B cell (primary cell): ENCODE measurements at regions of chr19 and their contacts with region 1.

Region 1: GRCh38 chr19:47130591-47131227 is at the start of gene SAE1:
- DNase-seq: peak; percentile 97
- ATAC-seq: peak; percentile 89
- H3K4me3 ChIP-seq: peak within 1 kb of the TSS; percentile 50 to 98 (median 88)
- H3K4me3 Mint-ChIP-seq: peak within 1 kb of the TSS; percentile 97
- H3K27ac ChIP-seq: peak within 1 kb of the TSS; percentile 76 to 89
- H3K27ac Mint-ChIP-seq: peak within 1 kb of the TSS; percentile 98
- H3K4me1 ChIP-seq: peaks cover 0 to 21% of the 10 kb centered on the region in 2 donors
- H3K4me1 Mint-ChIP-seq: peaks cover 39% of the 10 kb centered on the region
- H3K27me3 ChIP-seq: no peaks in the 10 kb centered on the region
- H3K27me3 Mint-ChIP-seq: no peaks in the 10 kb centered on the region
- CTCF ChIP-seq: peak; percentile 65
- total RNA-seq, gene SAE1: 41.0 and 45.1 TPM in 2 replicates

Region 2: GRCh38 chr19:47081111-47081510 is 49.6 kb before region 1 on chr19:
- CTCF ChIA-PET with region 1: interaction called, 152 read pairs
- POLR2A ChIA-PET with region 1: interaction called, 3 read pairs
- intact Hi-C with region 1: no loop called
- DNase-seq: no peak
- ATAC-seq: no peak
- H3K4me3 ChIP-seq: no peak overlapping the region
- H3K4me3 Mint-ChIP-seq: no peak overlapping the region
- H3K27ac ChIP-seq: no peak overlapping the region
- H3K27ac Mint-ChIP-seq: no peak overlapping the region
- H3K4me1 ChIP-seq: peaks cover 0 to 9% of the 10 kb centered on the region in 2 donors
- H3K4me1 Mint-ChIP-seq: peaks cover 5% of the 10 kb centered on the region
- H3K27me3 ChIP-seq: no peaks in the 10 kb centered on the region
- H3K27me3 Mint-ChIP-seq: no peaks in the 10 kb centered on the region
- CTCF ChIP-seq: no peak

Region 3: DNA sequence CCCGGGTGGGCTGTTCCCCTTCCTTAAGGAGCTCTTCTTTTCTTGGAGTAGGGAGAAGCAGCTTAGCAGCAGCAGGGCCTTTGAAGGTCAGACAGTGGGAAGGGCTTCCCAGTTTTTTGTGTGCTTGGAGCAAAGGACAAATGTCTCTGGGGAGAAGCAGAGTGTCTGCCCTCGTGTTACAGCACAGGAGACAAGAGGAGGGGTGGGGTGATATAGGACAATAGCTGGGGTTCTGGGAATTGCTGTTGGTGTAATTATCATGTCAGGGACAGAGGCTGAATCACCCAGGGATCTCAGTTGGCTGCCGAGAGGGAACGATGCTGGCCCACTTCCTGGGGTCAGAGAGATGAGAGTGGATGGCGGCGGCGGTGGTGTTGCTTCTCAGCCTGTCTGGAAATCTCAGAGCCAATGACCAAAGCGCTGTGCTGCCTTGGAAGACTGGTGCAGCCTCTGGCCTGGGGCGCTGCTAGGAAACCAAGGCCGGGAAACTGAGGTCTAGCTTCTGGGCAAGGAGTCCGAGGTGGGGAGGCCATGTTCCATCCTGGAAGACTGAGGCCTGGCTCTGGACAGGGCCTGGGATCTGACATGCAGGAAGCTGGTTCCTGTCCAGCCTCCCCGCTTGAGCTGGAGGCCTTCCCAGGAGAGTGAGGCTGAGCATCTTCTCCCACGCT is 145.2 kb after region 1 on chr19:
- CTCF ChIA-PET with region 1: no interaction called
- POLR2A ChIA-PET with region 1: no interaction called
- intact Hi-C with region 1: no loop called
- DNase-seq: no peak
- ATAC-seq: no peak
- H3K4me3 ChIP-seq: no peak overlapping the region
- H3K4me3 Mint-ChIP-seq: peak overlapping the region; percentile 75
- H3K27ac ChIP-seq: no peak overlapping the region
- H3K27ac Mint-ChIP-seq: peak overlapping the region; percentile 68
- H3K4me1 ChIP-seq: peaks cover 12 to 22% of the 10 kb centered on the region in 2 donors
- H3K4me1 Mint-ChIP-seq: peaks cover 22% of the 10 kb centered on the region
- H3K27me3 ChIP-seq: no peaks in the 10 kb centered on the region
- H3K27me3 Mint-ChIP-seq: no peaks in the 10 kb centered on the region
- CTCF ChIP-seq: no peak